ENCODE measurements at regions of chr9 and their contacts with region 1.

Region 1: DNA sequence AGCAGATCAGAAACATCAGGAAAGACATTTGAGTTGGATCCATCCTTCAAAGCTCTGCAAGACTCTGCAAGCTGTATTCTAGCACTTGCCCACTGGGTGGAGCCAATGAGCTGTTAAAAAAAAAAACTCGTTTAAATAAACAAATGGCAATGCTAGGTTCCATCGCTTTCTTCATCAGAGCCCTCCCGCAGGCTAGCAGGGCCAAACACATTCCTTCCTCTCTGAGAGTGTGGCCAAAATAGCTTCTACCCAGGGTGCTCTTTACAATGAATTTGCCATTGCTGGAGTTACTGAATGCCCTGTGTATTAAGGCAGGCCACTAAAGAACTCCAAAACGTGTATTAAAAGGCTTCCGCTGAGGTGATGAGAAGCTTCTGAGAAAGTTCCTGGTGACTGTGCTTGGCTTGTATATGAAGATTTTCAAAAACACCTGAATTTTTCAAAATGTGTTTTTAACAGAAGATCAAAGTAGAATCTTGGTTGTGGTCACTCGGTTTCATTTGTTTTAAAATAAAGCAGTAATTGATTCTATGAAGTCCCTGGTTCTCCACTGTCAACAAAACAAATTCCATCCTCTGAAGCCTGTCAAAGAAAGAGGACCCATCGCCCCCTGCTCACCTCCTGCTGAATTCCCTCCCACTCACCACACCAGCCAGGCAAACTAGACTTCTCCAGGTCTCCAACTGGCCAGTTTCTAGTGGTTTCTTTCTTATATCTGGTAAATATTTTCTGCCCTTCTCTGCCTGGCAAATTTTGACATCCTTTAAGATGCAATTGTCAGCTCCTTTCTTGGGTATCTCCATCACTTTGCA is 36.5 kb upstream of the EQTN start:
- DNase-seq: peak; percentile 54
- ATAC-seq: peak; percentile 75
- H3K4me3 ChIP-seq: no peak overlapping the region
- H3K27ac ChIP-seq: no peak overlapping the region
- H3K4me1 ChIP-seq: peaks cover 0 to 4% of the 10 kb centered on the region in 2 experiments; a peak in 1 of 4 replicates
- H3K27me3 ChIP-seq: peaks cover 10% of the 10 kb centered on the region
- CTCF ChIP-seq: peak; percentile 65 to 85 (median 78)
- POLR2A ChIP-seq: no peak
- RAD21 ChIP-seq: peak; percentile 76

Region 2: GRCh38 chr9:27385606-27386322 is 52.3 kb after region 1 on chr9:
- CTCF ChIA-PET with region 1: no interaction called
- POLR2A ChIA-PET with region 1: no interaction called
- RAD21 ChIA-PET with region 1: no interaction called
- intact Hi-C with region 1: loop called (anchors 5 kb)
- DNase-seq: no peak
- ATAC-seq: no peak
- H3K4me3 ChIP-seq: no peak overlapping the region
- H3K27ac ChIP-seq: no peak overlapping the region
- H3K4me1 ChIP-seq: no peaks in the 10 kb centered on the region
- H3K27me3 ChIP-seq: peaks cover 43% of the 10 kb centered on the region; the same call in 1 of the 2 replicates
- CTCF ChIP-seq: no peak
- POLR2A ChIP-seq: no peak
- RAD21 ChIP-seq: no peak

Region 3: DNA sequence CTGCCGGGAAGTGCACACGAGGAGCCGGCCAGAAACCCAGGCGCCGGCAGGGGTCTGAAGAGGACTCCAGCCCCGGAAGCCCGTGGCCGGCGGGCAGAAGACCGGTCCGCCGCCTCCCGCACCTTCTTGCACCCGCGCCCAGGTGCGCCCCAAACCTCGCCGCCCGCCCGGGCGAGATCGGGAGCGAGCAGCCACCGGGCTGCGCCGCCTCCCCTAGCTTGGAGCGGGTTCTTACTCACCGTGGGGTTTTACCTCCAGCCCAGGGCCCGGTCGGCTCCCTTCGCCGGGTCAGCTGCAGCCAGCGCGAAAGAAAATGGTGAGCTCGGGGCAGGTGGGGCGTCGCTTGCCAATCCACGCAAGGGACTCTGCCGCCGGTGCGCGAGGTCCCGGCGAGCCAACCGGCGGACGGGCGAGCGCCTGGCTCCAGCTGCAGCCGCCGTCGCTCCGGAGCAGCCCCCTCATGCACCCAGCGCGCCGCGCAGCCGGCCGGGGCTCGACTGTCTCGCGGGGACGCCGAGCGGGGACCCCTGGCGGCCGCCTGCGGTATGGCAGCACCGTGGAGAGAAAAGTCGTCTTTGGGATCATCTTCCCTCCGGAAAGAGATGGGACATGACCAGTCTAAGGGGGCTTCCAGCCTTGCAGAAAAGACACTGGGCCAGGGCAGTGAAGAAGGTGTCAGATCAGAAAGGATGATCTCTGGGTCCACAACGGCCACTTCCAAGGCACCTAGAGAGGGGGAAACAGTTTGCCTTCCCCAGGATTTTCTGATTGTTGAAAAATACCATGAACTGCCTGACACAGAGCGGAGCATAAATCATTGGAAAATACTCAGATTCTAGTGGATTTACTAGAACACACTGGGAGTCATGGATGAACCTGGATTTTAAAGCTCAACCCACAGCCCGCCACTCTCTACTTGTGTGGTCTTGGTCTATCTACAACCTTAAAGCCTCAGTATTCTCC is 196.2 kb after region 1 on chr9 and contains the start of gene MOB3B:
- CTCF ChIA-PET with region 1: interaction called, 17 read pairs
- POLR2A ChIA-PET with region 1: no interaction called
- RAD21 ChIA-PET with region 1: interaction called, 4 to 7 read pairs
- intact Hi-C with region 1: loop called (anchors 1 kb)
- DNase-seq: peak; percentile 8
- ATAC-seq: peak; percentile 89
- H3K4me3 ChIP-seq: peak within 1 kb of the TSS; percentile 50 to 62
- H3K27ac ChIP-seq: no peak within 1 kb of the TSS; the same call in 1 of the 2 replicates
- H3K4me1 ChIP-seq: peaks cover 0 to 16% of the 10 kb centered on the region in 2 experiments; a peak in 1 of 4 replicates
- H3K27me3 ChIP-seq: no peaks in the 10 kb centered on the region; the same call in 1 of the 2 replicates
- CTCF ChIP-seq: peak; percentile 37 to 82 (median 82); a peak in 5 of 6 replicates
- POLR2A ChIP-seq: no peak
- RAD21 ChIP-seq: peak; percentile 57
- total RNA-seq, gene MOB3B: 1.2 TPM

Region 4: GRCh38 chr9:27548055-27548741 is 214.8 kb after region 1 on chr9:
- CTCF ChIA-PET with region 1: interaction called, 18 read pairs
- POLR2A ChIA-PET with region 1: no interaction called
- RAD21 ChIA-PET with region 1: interaction called in 1 of 2 experiments, 5 read pairs
- intact Hi-C with region 1: loop called (anchors 1 kb)
- DNase-seq: peak; percentile 19
- ATAC-seq: peak; percentile 62; the same call in 1 of the 2 replicates
- H3K4me3 ChIP-seq: no peak overlapping the region
- H3K27ac ChIP-seq: no peak overlapping the region
- H3K4me1 ChIP-seq: no peaks in the 10 kb centered on the region
- H3K27me3 ChIP-seq: no peaks in the 10 kb centered on the region
- CTCF ChIP-seq: peak; percentile 21 to 57 (median 33); a peak in 4 of 6 replicates
- POLR2A ChIP-seq: no peak
- RAD21 ChIP-seq: peak; percentile 60

Region 5: DNA sequence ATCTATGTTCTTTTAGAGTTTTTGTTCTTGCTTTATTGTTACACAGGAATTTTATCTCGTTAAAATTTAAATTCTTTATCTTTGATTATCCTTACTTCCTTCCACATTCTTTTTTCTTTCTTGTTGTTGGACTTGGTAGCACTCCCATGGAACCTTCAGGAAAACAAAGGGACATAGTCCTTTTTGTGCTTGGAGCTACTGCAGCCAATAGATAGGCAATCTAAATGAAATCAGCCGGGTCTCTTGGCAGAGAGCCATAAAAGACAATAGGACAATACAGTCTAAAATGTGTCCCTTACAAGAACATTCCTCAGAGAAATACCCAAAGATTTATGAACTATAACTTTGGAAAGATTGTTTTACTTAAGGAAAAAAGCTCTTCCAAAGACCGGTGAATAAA is 787.9 kb after region 1 on chr9:
- CTCF ChIA-PET with region 1: no interaction called
- POLR2A ChIA-PET with region 1: no interaction called
- RAD21 ChIA-PET with region 1: no interaction called
- intact Hi-C with region 1: no loop called
- DNase-seq: no peak
- ATAC-seq: no peak
- H3K4me3 ChIP-seq: no peak overlapping the region
- H3K27ac ChIP-seq: no peak overlapping the region
- H3K4me1 ChIP-seq: no peaks in the 10 kb centered on the region
- H3K27me3 ChIP-seq: no peaks in the 10 kb centered on the region
- CTCF ChIP-seq: no peak
- POLR2A ChIP-seq: no peak
- RAD21 ChIP-seq: no peak

Measured in HCT116 (cell line).